Psoas muscle (tissue), 8 donors: ENCODE measurements at regions of chr15 and their contacts with region 1.

Region 1: DNA sequence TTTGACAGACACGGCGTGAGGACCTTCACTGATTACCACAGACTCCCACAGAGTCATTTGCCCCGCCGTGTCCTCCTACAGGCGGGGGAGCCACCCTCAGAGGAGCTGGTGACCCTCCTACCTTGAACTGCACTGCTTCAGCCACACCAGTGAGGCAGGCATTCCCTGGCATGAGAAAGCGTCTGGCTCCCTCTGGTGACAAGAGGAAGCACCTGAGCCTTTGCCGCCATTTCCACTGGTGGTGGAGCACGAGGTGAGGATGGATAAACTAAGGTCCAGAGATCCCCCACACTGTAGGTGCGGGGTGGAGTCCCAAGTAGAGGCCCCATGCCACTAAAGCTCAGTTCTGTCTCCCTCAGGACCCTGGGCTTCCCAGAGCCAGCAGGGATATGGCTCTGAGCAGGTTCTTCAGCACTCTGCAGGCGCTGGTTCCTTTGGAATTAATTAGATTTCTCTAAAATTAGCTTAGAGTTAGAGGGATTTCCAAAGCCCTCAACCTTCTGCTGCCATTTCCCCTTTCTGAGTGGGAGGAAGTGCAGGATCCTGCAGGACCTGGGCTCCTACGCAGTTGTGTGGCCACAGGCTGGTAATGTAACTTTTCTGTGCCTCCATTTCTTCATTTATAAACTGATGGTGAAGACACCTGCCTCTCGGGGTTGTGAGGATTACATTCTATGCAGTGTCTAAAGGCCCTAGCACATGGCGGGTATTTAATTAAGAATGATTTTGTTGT is 224.0 kb downstream of the SLCO3A1 start:
- DNase-seq: peak; percentile 65 to 75
- ATAC-seq: peak; percentile 73 to 84 (median 80)
- H3K4me3 ChIP-seq: no peak overlapping the region
- H3K27ac ChIP-seq: no peak overlapping the region
- H3K4me1 ChIP-seq: peaks cover 10% of the 10 kb centered on the region
- H3K27me3 ChIP-seq: peaks cover 0 to 1% (median 0%) of the 10 kb centered on the region in 3 donors
- CTCF ChIP-seq: peak; percentile 73

Region 2: GRCh38 chr15:91706322-91707032 is 371.0 kb before region 1 on chr15:
- intact Hi-C with region 1: loop called (anchors 2 to 5 kb)
- DNase-seq: peak; percentile 74 to 76
- ATAC-seq: peak; percentile 64 to 76 (median 72)
- H3K4me3 ChIP-seq: no peak overlapping the region
- H3K27ac ChIP-seq: no peak overlapping the region
- H3K4me1 ChIP-seq: no peaks in the 10 kb centered on the region
- H3K27me3 ChIP-seq: peaks cover 0 to 3% (median 0%) of the 10 kb centered on the region in 3 donors
- CTCF ChIP-seq: peak; percentile 78

Region 3: DNA sequence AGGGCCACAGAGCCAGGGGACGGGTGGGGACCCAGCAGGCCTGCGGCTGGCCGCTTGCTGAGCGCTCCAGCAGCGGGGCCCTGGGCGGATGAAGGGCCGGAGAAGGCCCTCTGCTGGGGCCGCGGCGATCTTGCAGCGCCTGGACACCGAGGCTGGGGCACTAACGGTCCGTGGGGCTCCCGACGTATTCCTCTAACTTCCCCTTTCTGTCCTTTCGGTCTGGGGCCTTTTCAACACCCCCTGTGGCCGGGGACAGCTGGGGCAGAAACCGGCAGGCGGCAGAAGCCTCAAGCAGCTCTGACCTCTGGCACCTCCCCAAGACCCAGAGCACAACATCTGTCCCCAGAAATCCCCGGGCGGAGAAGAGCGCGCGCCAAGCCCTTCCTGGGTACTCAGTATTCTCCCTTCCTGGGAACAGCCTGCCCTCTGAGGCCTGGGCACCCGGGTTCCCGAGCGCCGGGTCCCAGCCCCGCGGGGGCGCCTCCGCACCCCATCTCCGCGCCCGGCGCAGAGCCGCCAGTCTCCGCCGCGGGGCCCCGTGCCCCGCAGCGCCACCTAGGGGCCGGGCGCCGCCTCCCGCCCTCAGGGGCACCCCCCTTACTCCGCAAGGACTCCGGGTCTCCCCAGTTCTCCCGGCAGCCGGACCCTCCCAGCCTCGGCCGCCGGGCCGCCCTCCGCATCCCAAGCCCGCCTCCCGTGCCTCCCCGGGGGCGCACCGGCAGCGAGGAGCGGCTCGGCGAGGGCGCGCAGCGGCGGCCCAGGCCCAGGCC is 224.6 kb before region 1 on chr15:
- intact Hi-C with region 1: loop called (anchors 2 to 5 kb)
- DNase-seq: peak; percentile 78 to 90
- ATAC-seq: peak; percentile 85 to 90 (median 89)
- H3K4me3 ChIP-seq: peak overlapping the region; percentile 81
- H3K27ac ChIP-seq: peak overlapping the region; percentile 78
- H3K4me1 ChIP-seq: peaks cover 10% of the 10 kb centered on the region
- H3K27me3 ChIP-seq: no peaks in the 10 kb centered on the region
- CTCF ChIP-seq: peak; percentile 74

Region 4: GRCh38 chr15:91947683-91948608 is 129.6 kb before region 1 on chr15:
- intact Hi-C with region 1: loop called in 1 of 2 experiments (anchors 5 kb)
- DNase-seq: no peak
- ATAC-seq: peak in 2 of 4 donors; percentile 18 to 31
- H3K4me3 ChIP-seq: no peak overlapping the region
- H3K27ac ChIP-seq: no peak overlapping the region
- H3K4me1 ChIP-seq: peaks cover 45% of the 10 kb centered on the region
- H3K27me3 ChIP-seq: no peaks in the 10 kb centered on the region
- CTCF ChIP-seq: no peak